Motor neuron (in vitro differentiated cells): ENCODE measurements at regions of chr12 and their contacts with region 1.

Region 1: GRCh38 chr12:80412369-80412953 is 31.6 kb upstream of the PTPRQ start:
- ATAC-seq: peak in 5 of 8 experiments; percentile 44 to 79 (median 58)
- H3K4me3 ChIP-seq: no peak overlapping the region
- H3K27ac ChIP-seq: no peak overlapping the region
- H3K4me1 ChIP-seq: no peaks in the 10 kb centered on the region

Region 2: GRCh38 chr12:80756875-80757274 is 344.4 kb after region 1 on chr12:
- in situ Hi-C with region 1: loop called in 3 of 9 experiments (anchors 10 to 25 kb)
- ATAC-seq: no peak
- H3K4me3 ChIP-seq: no peak overlapping the region
- H3K27ac ChIP-seq: no peak overlapping the region
- H3K4me1 ChIP-seq: no peaks in the 10 kb centered on the region

Region 3: GRCh38 chr12:80763874-80764273 is 351.4 kb after region 1 on chr12:
- in situ Hi-C with region 1: loop called in 3 of 9 experiments (anchors 10 to 25 kb)
- ATAC-seq: no peak
- H3K4me3 ChIP-seq: no peak overlapping the region
- H3K27ac ChIP-seq: no peak overlapping the region
- H3K4me1 ChIP-seq: peaks cover 0 to 22% of the 10 kb centered on the region in 2 donors